ENCODE measurements at regions of chr19 and their contacts with region 1.

Region 1: GRCh38 chr19:13794757-13795589 is at the start of gene ZSWIM4:
- DNase-seq: peak; percentile 67 to 93 (median 77)
- ATAC-seq: peak; percentile 95
- H3K4me3 ChIP-seq: peak within 1 kb of the TSS; percentile 84
- H3K4me3 Mint-ChIP-seq: peak within 1 kb of the TSS; percentile 93 to 97 (median 94)
- H3K27ac ChIP-seq: peak within 1 kb of the TSS; percentile 56
- H3K27ac Mint-ChIP-seq: peak within 1 kb of the TSS; percentile 89 to 97 (median 95)
- H3K4me1 ChIP-seq: peaks cover 14 to 21% of the 10 kb centered on the region in 2 donors
- H3K4me1 Mint-ChIP-seq: peaks cover 22 to 46% (median 37%) of the 10 kb centered on the region in 7 donors
- H3K27me3 ChIP-seq: no peaks in the 10 kb centered on the region
- H3K27me3 Mint-ChIP-seq: no peaks in the 10 kb centered on the region
- total RNA-seq, gene ZSWIM4: 4.8 to 7.8 (median 5.9) TPM

Region 2: DNA sequence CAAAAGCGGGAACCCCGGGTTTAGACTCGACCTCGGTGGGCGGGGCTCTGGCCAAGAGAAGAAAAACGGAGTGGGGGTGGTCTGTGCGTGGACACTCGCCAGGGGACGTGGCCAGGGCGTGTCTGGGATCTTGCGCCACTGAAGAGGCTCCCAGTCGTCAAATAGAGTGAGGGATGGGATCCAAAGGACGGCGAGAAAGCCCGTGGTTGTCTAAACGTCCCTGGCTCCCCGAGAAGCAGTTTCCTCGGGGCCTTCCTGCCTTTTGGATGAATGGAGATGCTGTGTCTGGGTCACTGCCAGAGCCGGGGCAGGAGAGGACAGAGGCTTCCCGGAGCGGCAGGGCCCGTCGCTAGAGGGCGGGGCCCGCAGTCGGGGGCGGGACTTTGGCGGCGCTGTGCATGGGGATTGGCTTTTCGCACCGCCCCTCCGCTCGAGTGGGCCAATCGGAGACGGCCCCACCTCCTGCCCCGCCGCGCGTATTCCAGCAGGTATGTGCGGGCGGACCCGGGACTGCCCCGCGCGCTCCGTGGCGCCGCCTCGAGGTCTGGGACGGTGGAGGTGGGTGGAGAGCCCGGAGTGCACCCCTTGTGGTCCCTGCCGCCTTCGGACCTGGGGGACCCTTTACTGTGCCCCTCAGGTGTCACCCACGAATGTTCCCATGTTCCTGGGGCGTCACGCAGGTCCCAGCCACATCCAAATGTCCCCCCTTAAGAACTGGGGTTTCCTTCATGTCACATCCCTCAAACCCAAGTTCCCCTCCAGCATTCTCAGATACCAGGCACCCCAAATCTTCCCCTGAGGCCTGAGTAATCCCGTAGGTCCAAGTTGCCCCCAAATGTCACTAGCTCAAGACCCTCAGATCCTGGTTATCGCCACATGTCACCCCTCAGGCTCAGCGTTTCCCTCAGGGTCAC is 38.6 kb after region 1 on chr19:
- CTCF ChIA-PET with region 1: interaction called, 5 read pairs
- POLR2A ChIA-PET with region 1: interaction called, 20 read pairs
- intact Hi-C with region 1: loop called in 1 of 2 experiments (anchors 1 kb)
- DNase-seq: peak; percentile 88 to 97 (median 92)
- ATAC-seq: peak; percentile 69
- H3K4me3 ChIP-seq: peak overlapping the region; percentile 70
- H3K4me3 Mint-ChIP-seq: peak overlapping the region; percentile 79 to 93 (median 88)
- H3K27ac ChIP-seq: peak overlapping the region; percentile 85
- H3K27ac Mint-ChIP-seq: peak overlapping the region; percentile 88 to 97 (median 91)
- H3K4me1 ChIP-seq: peaks cover 31 to 41% of the 10 kb centered on the region in 2 donors
- H3K4me1 Mint-ChIP-seq: peaks cover 15 to 41% (median 36%) of the 10 kb centered on the region in 7 donors
- H3K27me3 ChIP-seq: no peaks in the 10 kb centered on the region
- H3K27me3 Mint-ChIP-seq: no peaks in the 10 kb centered on the region

Region 3: GRCh38 chr19:13839130-13839937 is 44.4 kb after region 1 on chr19:
- CTCF ChIA-PET with region 1: interaction called, 5 read pairs
- POLR2A ChIA-PET with region 1: interaction called, 20 read pairs
- intact Hi-C with region 1: loop called in 1 of 2 experiments (anchors 1 kb)
- DNase-seq: peak; percentile 53 to 90 (median 59)
- ATAC-seq: peak; percentile 21
- H3K4me3 ChIP-seq: peak overlapping the region; percentile 50
- H3K4me3 Mint-ChIP-seq: peak overlapping the region; percentile 76 to 96 (median 86)
- H3K27ac ChIP-seq: peak overlapping the region; percentile 91
- H3K27ac Mint-ChIP-seq: peak overlapping the region; percentile 90 to 98 (median 94)
- H3K4me1 ChIP-seq: peaks cover 67 to 76% of the 10 kb centered on the region in 2 donors
- H3K4me1 Mint-ChIP-seq: peaks cover 11 to 78% (median 55%) of the 10 kb centered on the region in 7 donors
- H3K27me3 ChIP-seq: no peaks in the 10 kb centered on the region
- H3K27me3 Mint-ChIP-seq: no peaks in the 10 kb centered on the region